Uterus (tissue), 4 donors: ENCODE measurements at regions of chr1 and their contacts with region 1.

Region 1: GRCh38 chr1:8314346-8315280 is 3.3 kb upstream of the SLC45A1 start:
- DNase-seq: peak; percentile 79 to 83
- H3K4me3 ChIP-seq: no peak overlapping the region
- H3K27ac ChIP-seq: no peak overlapping the region
- H3K4me1 ChIP-seq: no peaks in the 10 kb centered on the region
- H3K27me3 ChIP-seq: no peaks in the 10 kb centered on the region
- CTCF ChIP-seq: peak; percentile 83 to 97 (median 92)
- POLR2A ChIP-seq: no peak

Region 2: DNA sequence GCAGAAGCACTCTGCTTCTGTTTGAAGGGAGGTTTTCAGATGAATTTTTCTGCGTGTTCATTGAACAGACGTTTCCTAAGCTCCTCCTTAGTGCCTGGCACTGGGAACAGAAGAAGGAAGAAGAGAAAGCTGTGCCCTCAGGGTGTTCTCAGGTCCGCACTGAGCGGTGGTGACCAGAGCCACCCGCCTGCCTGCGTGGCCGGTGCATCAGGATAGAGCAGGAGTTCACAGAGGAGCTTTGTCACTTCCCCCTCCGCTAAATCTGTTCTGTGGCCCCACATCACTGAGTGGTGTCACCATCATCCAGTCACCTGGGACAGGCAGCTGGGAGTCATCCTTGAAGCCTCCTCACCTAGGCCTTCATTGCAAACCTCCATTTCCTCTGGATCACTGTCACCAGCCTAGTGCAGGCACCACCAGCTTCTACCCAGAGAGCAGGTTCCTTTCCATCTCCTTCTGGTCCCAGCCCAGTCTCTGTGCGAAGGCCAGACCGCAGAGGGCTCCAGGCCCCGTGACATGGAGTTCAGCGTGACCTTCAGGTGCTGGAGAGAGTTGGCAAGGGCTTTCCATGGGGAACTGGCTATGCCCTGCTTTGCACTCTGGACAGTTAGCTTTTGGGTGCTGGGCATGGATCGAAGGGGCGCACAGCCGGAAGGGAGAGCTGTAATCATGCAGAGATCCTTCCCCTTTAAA is 331.4 kb before region 1 on chr1:
- intact Hi-C with region 1: loop called (anchors 5 kb)
- DNase-seq: no peak
- H3K4me3 ChIP-seq: no peak overlapping the region
- H3K27ac ChIP-seq: no peak overlapping the region
- H3K4me1 ChIP-seq: no peaks in the 10 kb centered on the region
- H3K27me3 ChIP-seq: no peaks in the 10 kb centered on the region
- CTCF ChIP-seq: no peak
- POLR2A ChIP-seq: no peak

Region 3: GRCh38 chr1:8026153-8026975 is 288.2 kb before region 1 on chr1 and contains the start of gene ERRFI1:
- intact Hi-C with region 1: loop called (anchors 5 kb)
- DNase-seq: peak; percentile 93 to 96
- H3K4me3 ChIP-seq: peak within 1 kb of the TSS; percentile 62 to 68
- H3K27ac ChIP-seq: peak within 1 kb of the TSS; percentile 94 to 100
- H3K4me1 ChIP-seq: peaks cover 0 to 9% of the 10 kb centered on the region in 2 donors
- H3K27me3 ChIP-seq: no peaks in the 10 kb centered on the region
- CTCF ChIP-seq: peak in 2 of 4 experiments; percentile 26 to 35
- POLR2A ChIP-seq: peak; percentile 100
- total RNA-seq, gene ERRFI1: 19.0 to 67.6 (median 39.6) TPM

Region 4: GRCh38 chr1:8217011-8217711 is 97.5 kb before region 1 on chr1:
- intact Hi-C with region 1: no loop called
- DNase-seq: peak; percentile 41 to 61
- H3K4me3 ChIP-seq: peak overlapping the region; percentile 13 to 40
- H3K27ac ChIP-seq: peak overlapping the region; percentile 69 to 77
- H3K4me1 ChIP-seq: no peaks in the 10 kb centered on the region
- H3K27me3 ChIP-seq: no peaks in the 10 kb centered on the region
- CTCF ChIP-seq: peak in 3 of 4 experiments; percentile 6 to 36 (median 19)
- POLR2A ChIP-seq: no peak

Region 5: GRCh38 chr1:8259498-8260290 is 54.9 kb before region 1 on chr1:
- intact Hi-C with region 1: no loop called
- DNase-seq: peak; percentile 34 to 48
- H3K4me3 ChIP-seq: no peak overlapping the region
- H3K27ac ChIP-seq: peak overlapping the region; percentile 33 to 59
- H3K4me1 ChIP-seq: peaks cover 0 to 7% of the 10 kb centered on the region in 2 donors
- H3K27me3 ChIP-seq: no peaks in the 10 kb centered on the region
- CTCF ChIP-seq: no peak
- POLR2A ChIP-seq: no peak

Region 6: GRCh38 chr1:8545078-8545477 is 230.5 kb after region 1 on chr1:
- intact Hi-C with region 1: no loop called
- DNase-seq: no peak
- H3K4me3 ChIP-seq: no peak overlapping the region
- H3K27ac ChIP-seq: peak overlapping the region in 1 of 2 donors; percentile 35
- H3K4me1 ChIP-seq: peaks cover 0 to 25% of the 10 kb centered on the region in 2 donors
- H3K27me3 ChIP-seq: no peaks in the 10 kb centered on the region
- CTCF ChIP-seq: no peak
- POLR2A ChIP-seq: no peak